ENCODE measurements at regions of chr5 and their contacts with region 1.

Region 1: DNA sequence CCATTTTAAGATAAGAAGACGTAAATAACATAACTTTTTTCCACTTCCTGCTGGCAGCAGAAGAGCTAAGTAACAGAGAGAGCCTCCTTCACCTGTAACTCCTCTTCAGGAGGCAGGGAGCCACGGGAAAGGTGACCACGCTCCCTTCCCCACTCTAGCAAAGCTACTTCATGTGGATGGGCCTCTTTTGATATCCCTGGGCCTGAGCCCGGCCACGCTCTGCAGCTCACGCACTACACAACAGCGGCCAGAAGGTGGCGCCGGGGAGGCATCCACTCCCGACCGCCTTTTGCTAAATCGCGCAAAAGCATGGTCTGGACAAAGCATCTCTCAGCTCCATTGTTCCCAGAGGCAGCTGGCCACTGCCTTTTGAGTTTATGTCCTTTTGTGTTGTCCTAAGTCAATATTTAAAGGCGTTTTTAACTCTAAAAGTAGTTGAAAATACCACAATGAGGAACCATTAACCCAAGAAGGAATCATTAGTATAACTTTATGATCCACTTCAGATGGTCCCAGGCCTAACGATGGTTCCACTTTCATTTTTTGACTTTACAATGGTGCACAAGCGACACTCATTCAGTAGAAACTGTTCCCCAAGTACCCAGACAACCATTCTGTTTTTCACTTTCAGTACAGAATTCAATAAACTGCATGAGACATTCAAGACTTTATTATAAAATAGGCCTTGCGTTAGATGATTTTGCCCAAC is 23.6 kb downstream of the CMBL start:
- DNase-seq: peak; percentile 88
- ATAC-seq: peak; percentile 98
- H3K4me3 Mint-ChIP-seq: no peak overlapping the region
- H3K27ac Mint-ChIP-seq: no peak overlapping the region
- H3K4me1 Mint-ChIP-seq: peaks cover 3% of the 10 kb centered on the region
- H3K27me3 Mint-ChIP-seq: no peaks in the 10 kb centered on the region
- CTCF ChIP-seq: peak; percentile 95

Region 2: DNA sequence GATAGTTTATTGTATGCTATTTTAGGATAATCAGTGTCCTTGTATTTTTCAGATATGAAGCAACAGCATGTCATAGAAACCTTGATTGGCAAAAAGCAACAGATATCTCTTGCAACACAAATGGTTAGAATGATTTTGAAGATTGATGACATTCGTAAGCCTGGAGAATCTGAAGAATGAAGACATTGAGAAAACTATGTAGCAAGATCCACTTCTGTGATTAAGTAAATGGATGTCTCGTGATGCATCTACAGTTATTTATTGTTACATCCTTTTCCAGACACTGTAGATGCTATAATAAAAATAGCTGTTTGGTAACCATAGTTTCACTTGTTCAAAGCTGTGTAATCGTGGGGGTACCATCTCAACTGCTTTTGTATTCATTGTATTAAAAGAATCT is 19.5 kb before region 1 on chr5:
- CTCF ChIA-PET with region 1: interaction called, 12 read pairs
- POLR2A ChIA-PET with region 1: no interaction called
- DNase-seq: no peak
- ATAC-seq: no peak
- H3K4me3 Mint-ChIP-seq: no peak overlapping the region
- H3K27ac Mint-ChIP-seq: no peak overlapping the region
- H3K4me1 Mint-ChIP-seq: peaks cover 10% of the 10 kb centered on the region
- H3K27me3 Mint-ChIP-seq: no peaks in the 10 kb centered on the region
- CTCF ChIP-seq: no peak

Region 3: GRCh38 chr5:10301842-10302610 is 17.9 kb after region 1 on chr5:
- CTCF ChIA-PET with region 1: interaction called, 17 read pairs
- POLR2A ChIA-PET with region 1: interaction called, 3 read pairs
- DNase-seq: no peak
- ATAC-seq: no peak
- H3K4me3 Mint-ChIP-seq: no peak overlapping the region
- H3K27ac Mint-ChIP-seq: no peak overlapping the region
- H3K4me1 Mint-ChIP-seq: peaks cover 25% of the 10 kb centered on the region
- H3K27me3 Mint-ChIP-seq: peaks cover 6% of the 10 kb centered on the region
- CTCF ChIP-seq: no peak

Region 4: DNA sequence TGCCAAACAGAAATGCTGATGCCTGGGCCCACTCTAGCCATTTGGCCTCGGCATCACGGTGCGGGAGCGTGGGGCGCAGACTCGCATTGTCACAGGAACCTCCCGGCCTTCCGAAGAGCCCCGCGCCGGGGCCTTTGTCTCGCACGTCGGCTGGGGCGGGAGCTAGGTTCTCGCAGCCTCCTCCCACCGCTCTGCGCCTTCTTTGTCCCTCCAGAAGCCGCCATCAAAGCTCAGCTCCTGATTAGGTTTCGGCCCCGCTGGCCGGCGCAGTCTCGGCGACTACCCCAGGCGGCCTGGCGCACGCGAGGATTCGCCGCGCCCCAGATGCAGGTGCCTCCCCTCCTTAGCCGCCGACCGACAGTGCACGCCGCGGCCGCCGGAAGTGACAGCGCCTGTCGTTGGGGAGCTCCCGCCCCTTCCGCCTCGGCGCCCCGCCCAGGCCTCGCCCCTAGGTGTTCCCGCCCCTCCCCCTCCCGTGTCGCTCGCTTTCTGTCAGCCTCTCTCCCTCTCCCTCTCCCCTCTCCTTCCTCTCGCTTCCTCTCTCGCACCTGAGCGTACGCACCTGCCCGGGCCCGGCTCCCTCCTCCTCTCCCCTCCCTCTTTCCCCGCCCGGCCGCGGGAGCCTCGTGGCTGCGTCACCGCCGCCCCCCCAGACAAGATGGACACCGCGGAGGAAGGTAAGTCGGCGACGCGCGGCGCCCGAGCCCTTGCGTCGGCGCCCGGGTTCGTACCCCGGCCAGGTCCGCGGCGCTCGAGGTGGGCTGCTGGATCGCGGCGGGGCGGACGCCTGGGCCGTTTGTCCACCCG is 69.4 kb after region 1 on chr5 and contains the start of gene MARCHF6:
- CTCF ChIA-PET with region 1: interaction called, 17 read pairs
- POLR2A ChIA-PET with region 1: interaction called, 3 read pairs
- DNase-seq: peak; percentile 96
- ATAC-seq: peak; percentile 83
- H3K4me3 Mint-ChIP-seq: peak within 1 kb of the TSS; percentile 98
- H3K27ac Mint-ChIP-seq: peak within 1 kb of the TSS; percentile 99
- H3K4me1 Mint-ChIP-seq: peaks cover 41% of the 10 kb centered on the region
- H3K27me3 Mint-ChIP-seq: peaks cover 14% of the 10 kb centered on the region
- CTCF ChIP-seq: no peak
- total RNA-seq, gene MARCHF6: 117 to 122 TPM (median 121 TPM) in 3 replicates

Region 5: DNA sequence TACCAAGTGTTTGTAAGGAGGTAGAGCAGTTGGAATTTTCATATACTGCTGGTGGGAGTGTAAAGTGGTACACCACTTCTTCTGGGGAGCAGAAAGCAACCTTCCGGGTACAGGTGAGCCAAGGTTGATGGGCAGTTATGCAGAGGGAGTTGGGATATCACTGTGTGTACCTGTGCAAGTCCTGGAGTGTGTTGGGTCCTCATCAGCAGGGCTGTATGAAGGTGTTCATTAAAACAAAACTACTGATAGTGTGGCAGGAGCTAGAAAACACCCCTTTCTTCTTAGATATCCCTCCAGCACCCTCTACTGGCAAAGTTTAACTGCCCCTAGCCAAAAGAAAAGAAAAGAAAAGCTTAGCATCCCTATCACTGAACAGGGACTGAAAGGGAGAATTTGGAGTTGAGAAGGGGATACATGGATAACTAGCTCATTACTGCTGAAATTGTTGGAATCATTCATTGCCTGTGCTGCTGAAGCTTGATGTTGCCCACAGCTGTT is 80.2 kb after region 1 on chr5:
- CTCF ChIA-PET with region 1: interaction called, 25 read pairs
- POLR2A ChIA-PET with region 1: no interaction called
- DNase-seq: no peak
- ATAC-seq: peak; percentile 41
- H3K4me3 Mint-ChIP-seq: no peak overlapping the region
- H3K27ac Mint-ChIP-seq: no peak overlapping the region
- H3K4me1 Mint-ChIP-seq: peaks cover 10% of the 10 kb centered on the region; the same call in 1 of the 2 replicates
- H3K27me3 Mint-ChIP-seq: no peaks in the 10 kb centered on the region
- CTCF ChIP-seq: no peak; the same call in 1 of the 2 replicates

Region 6: GRCh38 chr5:10424124-10424731 is 140.1 kb after region 1 on chr5:
- CTCF ChIA-PET with region 1: interaction called, 38 read pairs
- POLR2A ChIA-PET with region 1: no interaction called
- DNase-seq: peak; percentile 34
- ATAC-seq: peak; percentile 90
- H3K4me3 Mint-ChIP-seq: no peak overlapping the region
- H3K27ac Mint-ChIP-seq: no peak overlapping the region
- H3K4me1 Mint-ChIP-seq: peaks cover 21% of the 10 kb centered on the region
- H3K27me3 Mint-ChIP-seq: no peaks in the 10 kb centered on the region
- CTCF ChIP-seq: no peak

Measured in WTC11 (cell line).